H1 (cell line): ENCODE measurements at regions of chr1 and their contacts with region 1.

Region 1: DNA sequence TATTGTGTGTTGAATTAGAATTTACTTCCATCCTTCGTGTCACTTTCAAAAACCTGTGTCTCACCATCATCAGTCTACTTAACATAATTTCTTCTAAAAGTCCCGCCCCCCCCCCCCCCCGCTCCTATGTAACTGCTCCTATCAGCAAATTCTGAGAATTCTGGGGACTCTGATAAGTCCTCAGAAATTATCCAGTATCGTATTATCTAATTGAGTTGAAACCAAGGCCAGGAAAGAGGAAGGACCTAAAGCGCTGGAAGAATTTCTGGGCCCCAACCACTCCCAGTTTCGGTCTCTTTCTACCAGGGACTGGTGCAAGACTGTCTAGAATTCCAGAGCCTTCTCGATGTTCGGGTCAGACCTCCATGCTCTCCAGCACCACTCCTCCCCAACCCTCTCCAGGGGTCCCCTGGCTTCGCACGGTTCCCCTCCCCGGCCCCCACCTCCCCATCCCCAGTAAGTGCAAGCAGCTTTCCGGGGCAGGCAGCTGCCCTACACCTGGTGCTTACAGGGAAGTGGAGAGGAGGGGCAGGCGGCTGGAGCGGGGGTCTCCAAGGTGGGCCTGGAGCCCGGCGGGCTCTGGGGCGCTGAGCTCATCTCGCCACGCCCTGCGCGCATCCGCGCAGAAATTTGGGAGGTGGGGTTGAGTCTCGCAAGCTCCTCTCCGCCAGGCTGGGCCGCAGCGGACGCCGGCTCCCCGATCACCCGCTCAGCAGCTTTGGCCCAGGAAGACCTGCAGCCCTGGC is 16.0 kb upstream of the ZNF496 start:
- DNase-seq: no peak
- H3K4me3 ChIP-seq: peak overlapping the region; percentile 6 to 55 (median 18); a peak in 6 of 8 replicates
- H3K27ac ChIP-seq: no peak overlapping the region
- H3K4me1 ChIP-seq: no peaks in the 10 kb centered on the region; a peak in 1 of 7 replicates
- H3K27me3 ChIP-seq: no peaks in the 10 kb centered on the region; a peak in 1 of 7 replicates
- CTCF ChIP-seq: no peak
- EP300 ChIP-seq: no peak
- POLR2A ChIP-seq: no peak
- RAD21 ChIP-seq: no peak

Region 2: DNA sequence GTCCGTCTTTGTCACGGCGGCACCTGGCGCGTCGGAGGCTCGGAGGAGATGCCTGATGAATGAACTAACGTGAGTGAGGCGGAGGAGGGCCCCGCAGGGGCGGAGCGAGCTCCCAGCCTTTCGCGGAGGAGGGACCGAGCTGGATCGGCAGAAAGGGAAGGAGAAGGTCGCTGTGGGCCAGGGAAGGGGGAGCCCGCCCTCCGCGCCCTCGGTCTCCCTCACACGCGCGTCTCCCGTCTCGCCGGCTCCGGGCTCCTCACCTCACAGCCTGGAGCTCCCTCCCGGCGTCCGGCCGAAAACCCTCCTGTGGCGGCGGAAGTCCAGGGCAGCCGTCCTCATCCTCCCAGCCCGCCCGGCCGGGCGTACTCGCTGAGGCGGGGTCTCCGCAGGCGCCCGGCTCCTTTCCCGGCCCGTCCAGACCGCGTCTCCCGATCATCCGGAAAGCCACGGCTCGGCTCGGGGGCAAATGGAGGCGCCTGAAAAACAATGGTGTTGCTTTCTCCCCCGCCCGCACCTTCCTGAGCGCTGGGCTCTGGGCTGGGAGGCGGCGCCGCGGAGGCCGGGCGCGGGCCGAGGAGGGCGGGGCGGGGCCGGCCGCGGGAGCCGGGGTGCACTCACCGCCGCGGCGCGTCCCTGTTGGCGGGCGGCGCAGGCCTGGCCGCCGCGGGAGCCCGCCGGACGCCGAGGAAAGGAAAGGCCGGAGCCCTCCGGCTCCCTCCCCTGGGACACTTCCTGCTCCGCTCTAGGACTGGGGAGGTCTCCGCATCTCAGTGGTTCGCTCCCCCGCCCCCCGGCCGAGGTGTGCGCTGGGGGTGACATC is 16.3 kb before region 1 on chr1 and contains the start of gene ZNF496:
- CTCF ChIA-PET with region 1: interaction called, 4 read pairs
- POLR2A ChIA-PET with region 1: interaction called, 53 read pairs
- DNase-seq: peak; percentile 50 to 93
- H3K4me3 ChIP-seq: peak within 1 kb of the TSS; percentile 83 to 94 (median 88)
- H3K27ac ChIP-seq: peak within 1 kb of the TSS; percentile 87
- H3K4me1 ChIP-seq: peaks cover 9 to 35% (median 27%) of the 10 kb centered on the region in 4 experiments
- H3K27me3 ChIP-seq: no peaks in the 10 kb centered on the region
- CTCF ChIP-seq: no peak
- EP300 ChIP-seq: no peak
- POLR2A ChIP-seq: no peak; a peak in 1 of 3 replicates
- RAD21 ChIP-seq: no peak
- total RNA-seq, gene ZNF496: 64.2 and 71.4 TPM in 2 replicates